Right cardiac atrium (tissue), 5 donors: ENCODE measurements at regions of chr17 and their contacts with region 1.

Region 1: GRCh38 chr17:44496815-44497214 is 6.4 kb downstream of the GPATCH8 start:
- DNase-seq: no peak
- ATAC-seq: no peak
- H3K4me3 ChIP-seq: no peak overlapping the region
- H3K27ac ChIP-seq: no peak overlapping the region
- H3K4me1 ChIP-seq: peaks cover 6% of the 10 kb centered on the region
- H3K27me3 ChIP-seq: no peaks in the 10 kb centered on the region

Region 2: GRCh38 chr17:44438636-44439035 is 58.2 kb before region 1 on chr17:
- intact Hi-C with region 1: loop called in 1 of 4 experiments (anchors 10 kb)
- DNase-seq: peak in 1 of 3 donors; percentile 67
- ATAC-seq: peak; percentile 90 to 94
- H3K4me3 ChIP-seq: no peak overlapping the region
- H3K27ac ChIP-seq: peak overlapping the region; percentile 17
- H3K4me1 ChIP-seq: peaks cover 1% of the 10 kb centered on the region
- H3K27me3 ChIP-seq: no peaks in the 10 kb centered on the region